ENCODE measurements at regions of chr3 and their contacts with region 1.

Region 1: GRCh38 chr3:190064112-190064511 is 56.6 kb downstream of the P3H2 start:
- DNase-seq: peak; percentile 33
- ATAC-seq: peak; percentile 82
- H3K4me3 ChIP-seq: no peak overlapping the region
- H3K27ac ChIP-seq: no peak overlapping the region
- H3K4me1 ChIP-seq: peaks cover 11 to 15% of the 10 kb centered on the region in 2 experiments
- H3K27me3 ChIP-seq: no peaks in the 10 kb centered on the region
- CTCF ChIP-seq: no peak
- POLR2A ChIP-seq: no peak
- RAD21 ChIP-seq: no peak

Region 2: GRCh38 chr3:190003681-190004123 is 60.4 kb before region 1 on chr3:
- CTCF ChIA-PET with region 1: no interaction called
- POLR2A ChIA-PET with region 1: no interaction called
- RAD21 ChIA-PET with region 1: no interaction called
- intact Hi-C with region 1: loop called (anchors 10 kb)
- DNase-seq: peak; percentile 22
- ATAC-seq: peak; percentile 98
- H3K4me3 ChIP-seq: no peak overlapping the region
- H3K27ac ChIP-seq: no peak overlapping the region
- H3K4me1 ChIP-seq: peaks cover 6 to 15% of the 10 kb centered on the region in 2 experiments; a peak in 3 of 4 replicates
- H3K27me3 ChIP-seq: no peaks in the 10 kb centered on the region
- CTCF ChIP-seq: no peak
- POLR2A ChIP-seq: no peak
- RAD21 ChIP-seq: no peak